Endothelial cell of umbilical vein (primary cell): ENCODE measurements at regions of chr20 and their contacts with region 1.

Region 1: GRCh38 chr20:51750037-51750763 is 18.0 kb downstream of the ATP9A start:
- DNase-seq: peak; percentile 94
- H3K4me3 ChIP-seq: no peak overlapping the region
- H3K27ac ChIP-seq: peak overlapping the region; percentile 52
- H3K4me1 ChIP-seq: peaks cover 37% of the 10 kb centered on the region
- H3K27me3 ChIP-seq: no peaks in the 10 kb centered on the region
- CTCF ChIP-seq: no peak
- POLR2A ChIP-seq: no peak

Region 2: DNA sequence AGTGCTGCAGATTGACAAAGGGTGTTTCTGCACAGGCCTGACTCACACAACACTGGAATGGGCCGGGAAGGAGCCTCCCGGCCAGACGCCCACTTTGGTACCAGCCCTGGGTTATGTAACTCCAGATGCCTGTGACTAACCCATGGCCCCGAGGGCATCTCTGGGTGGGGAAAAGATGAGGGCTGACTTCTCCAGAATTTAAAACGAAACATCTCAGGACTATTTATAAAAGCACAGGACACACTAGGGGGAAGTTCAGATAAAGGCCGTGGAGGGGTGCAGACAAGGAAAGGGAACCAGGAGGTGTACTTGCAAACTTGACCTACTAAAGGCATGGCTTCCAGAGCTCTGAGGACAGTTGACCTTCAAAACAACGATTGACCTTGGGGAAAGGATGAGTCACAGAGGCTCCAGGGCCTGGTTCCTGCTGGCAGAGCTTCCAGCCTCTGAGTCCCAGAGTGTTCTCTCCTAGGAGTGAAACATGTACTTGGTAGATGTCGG is 404.5 kb before region 1 on chr20:
- CTCF ChIA-PET with region 1: no interaction called
- POLR2A ChIA-PET with region 1: no interaction called
- dilution Hi-C with region 1: no loop called
- intact Hi-C with region 1: no loop called
- DNase-seq: peak; percentile 57
- H3K4me3 ChIP-seq: no peak overlapping the region
- H3K27ac ChIP-seq: no peak overlapping the region
- H3K4me1 ChIP-seq: peaks cover 8% of the 10 kb centered on the region
- H3K27me3 ChIP-seq: no peaks in the 10 kb centered on the region
- CTCF ChIP-seq: no peak
- POLR2A ChIP-seq: no peak

Region 3: GRCh38 chr20:51661609-51662178 is 88.5 kb before region 1 on chr20:
- CTCF ChIA-PET with region 1: interaction called, 3 read pairs
- POLR2A ChIA-PET with region 1: no interaction called
- dilution Hi-C with region 1: no loop called
- intact Hi-C with region 1: loop called (anchors 2 kb)
- DNase-seq: peak; percentile 79
- H3K4me3 ChIP-seq: no peak overlapping the region
- H3K27ac ChIP-seq: peak overlapping the region; percentile 98
- H3K4me1 ChIP-seq: peaks cover 32% of the 10 kb centered on the region
- H3K27me3 ChIP-seq: no peaks in the 10 kb centered on the region
- CTCF ChIP-seq: no peak
- POLR2A ChIP-seq: no peak

Region 4: GRCh38 chr20:51760905-51761546 is 10.8 kb after region 1 on chr20:
- CTCF ChIA-PET with region 1: interaction called, 8 read pairs
- POLR2A ChIA-PET with region 1: no interaction called
- dilution Hi-C with region 1: no loop called
- intact Hi-C with region 1: loop called (anchors 1 kb)
- DNase-seq: peak; percentile 83
- H3K4me3 ChIP-seq: no peak overlapping the region
- H3K27ac ChIP-seq: no peak overlapping the region
- H3K4me1 ChIP-seq: peaks cover 6% of the 10 kb centered on the region
- H3K27me3 ChIP-seq: no peaks in the 10 kb centered on the region
- CTCF ChIP-seq: no peak
- POLR2A ChIP-seq: no peak

Region 5: GRCh38 chr20:52118016-52118623 is 367.9 kb after region 1 on chr20:
- CTCF ChIA-PET with region 1: no interaction called
- POLR2A ChIA-PET with region 1: no interaction called
- dilution Hi-C with region 1: no loop called
- intact Hi-C with region 1: no loop called
- DNase-seq: no peak
- H3K4me3 ChIP-seq: no peak overlapping the region
- H3K27ac ChIP-seq: no peak overlapping the region
- H3K4me1 ChIP-seq: no peaks in the 10 kb centered on the region
- H3K27me3 ChIP-seq: no peaks in the 10 kb centered on the region
- CTCF ChIP-seq: no peak
- POLR2A ChIP-seq: no peak